ENCODE measurements at regions of chr3 and their contacts with region 1.

Region 1: DNA sequence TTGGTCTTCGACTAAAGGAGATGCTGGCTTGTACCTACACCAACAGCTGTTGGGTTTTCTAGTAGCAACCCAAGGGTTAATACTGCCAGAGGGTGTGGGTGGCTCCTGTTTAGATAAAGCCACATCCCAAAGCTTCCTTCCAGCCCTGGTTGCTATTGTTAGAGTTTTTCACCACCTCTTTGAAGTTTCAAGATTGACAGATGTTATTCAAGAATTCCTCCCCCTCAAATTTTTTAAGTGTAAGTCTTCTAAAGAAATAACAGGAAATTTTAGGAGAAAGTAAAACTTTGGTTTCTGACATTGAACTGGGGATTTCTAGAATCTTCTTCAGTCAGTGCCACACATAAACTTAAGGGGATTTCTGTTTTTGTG is 60.9 kb downstream of the TGFBR2 start:
- DNase-seq: peak; percentile 49
- H3K4me3 Mint-ChIP-seq: peak overlapping the region; percentile 5
- H3K27ac Mint-ChIP-seq: peak overlapping the region; percentile 85
- H3K4me1 Mint-ChIP-seq: peaks cover 92% of the 10 kb centered on the region
- H3K27me3 Mint-ChIP-seq: no peaks in the 10 kb centered on the region

Region 2: GRCh38 chr3:30681643-30682211 is 14.5 kb after region 1 on chr3:
- CTCF ChIA-PET with region 1: interaction called, 5 read pairs
- POLR2A ChIA-PET with region 1: interaction called, 3 read pairs
- intact Hi-C with region 1: loop called (anchors 2 kb)
- DNase-seq: no peak
- H3K4me3 Mint-ChIP-seq: no peak overlapping the region
- H3K27ac Mint-ChIP-seq: peak overlapping the region; percentile 65
- H3K4me1 Mint-ChIP-seq: peaks cover 86% of the 10 kb centered on the region
- H3K27me3 Mint-ChIP-seq: no peaks in the 10 kb centered on the region

Measured in activated CD4-positive, alpha-beta memory T cell treated with anti-CD3 and anti-CD28 coated beads for 36 hours (primary cell).